ENCODE measurements at regions of chr1 and their contacts with region 1.

Region 1: GRCh38 chr1:52867087-52867863 is 24.7 kb downstream of the ZYG11A start:
- DNase-seq: peak; percentile 8
- ATAC-seq: peak; percentile 31; the same call in 1 of the 2 replicates
- H3K4me3 ChIP-seq: no peak overlapping the region
- H3K27ac ChIP-seq: peak overlapping the region; percentile 16; the same call in 1 of the 2 replicates
- H3K4me1 ChIP-seq: no peaks in the 10 kb centered on the region
- H3K27me3 ChIP-seq: no peaks in the 10 kb centered on the region
- CTCF ChIP-seq: no peak

Region 2: GRCh38 chr1:52739699-52740467 is 127.4 kb before region 1 on chr1:
- CTCF ChIA-PET with region 1: no interaction called
- POLR2A ChIA-PET with region 1: interaction called, 12 read pairs
- intact Hi-C with region 1: no loop called
- DNase-seq: no peak
- ATAC-seq: no peak
- H3K4me3 ChIP-seq: no peak overlapping the region
- H3K27ac ChIP-seq: no peak overlapping the region
- H3K4me1 ChIP-seq: no peaks in the 10 kb centered on the region
- H3K27me3 ChIP-seq: no peaks in the 10 kb centered on the region
- CTCF ChIP-seq: no peak

Region 3: GRCh38 chr1:52825868-52826267 is 41.4 kb before region 1 on chr1:
- CTCF ChIA-PET with region 1: no interaction called
- POLR2A ChIA-PET with region 1: no interaction called
- intact Hi-C with region 1: no loop called
- DNase-seq: peak; percentile 57
- ATAC-seq: peak; percentile 85
- H3K4me3 ChIP-seq: no peak overlapping the region
- H3K27ac ChIP-seq: no peak overlapping the region
- H3K4me1 ChIP-seq: no peaks in the 10 kb centered on the region
- H3K27me3 ChIP-seq: no peaks in the 10 kb centered on the region
- CTCF ChIP-seq: peak; percentile 66

Measured in PC-3 (cell line).